Naive thymus-derived CD4-positive, alpha-beta T cell (primary cell): ENCODE measurements at regions of chr5 and their contacts with region 1.

Region 1: GRCh38 chr5:14142827-14143548 is at the start of gene TRIO:
- DNase-seq: peak; percentile 59 to 87 (median 70)
- ATAC-seq: peak; percentile 76
- H3K4me3 ChIP-seq: peak within 1 kb of the TSS; percentile 65
- H3K4me3 Mint-ChIP-seq: peak within 1 kb of the TSS; percentile 78 to 91 (median 86)
- H3K27ac ChIP-seq: peak within 1 kb of the TSS; percentile 46
- H3K27ac Mint-ChIP-seq: peak within 1 kb of the TSS in 5 of 9 donors; percentile 20 to 80 (median 38)
- H3K4me1 ChIP-seq: peaks cover 6% of the 10 kb centered on the region in 2 donors
- H3K4me1 Mint-ChIP-seq: peaks cover 5 to 18% (median 14%) of the 10 kb centered on the region in 7 donors
- H3K27me3 ChIP-seq: peaks cover 3% of the 10 kb centered on the region in 2 donors
- H3K27me3 Mint-ChIP-seq: peaks cover 15 to 63% (median 35%) of the 10 kb centered on the region in 5 donors
- total RNA-seq, gene TRIO: 5.5 to 45.9 (median 8.5) TPM

Region 2: GRCh38 chr5:14011089-14012004 is 131.6 kb before region 1 on chr5:
- CTCF ChIA-PET with region 1: no interaction called
- POLR2A ChIA-PET with region 1: no interaction called
- intact Hi-C with region 1: loop called in 1 of 2 experiments (anchors 5 kb)
- DNase-seq: peak in 5 of 9 donors; percentile 0 to 61 (median 9)
- ATAC-seq: peak; percentile 66
- H3K4me3 ChIP-seq: no peak overlapping the region
- H3K4me3 Mint-ChIP-seq: peak overlapping the region; percentile 64 to 88 (median 82)
- H3K27ac ChIP-seq: no peak overlapping the region
- H3K27ac Mint-ChIP-seq: no peak overlapping the region
- H3K4me1 ChIP-seq: peaks cover 0 to 3% of the 10 kb centered on the region in 2 donors
- H3K4me1 Mint-ChIP-seq: peaks cover 6 to 19% (median 11%) of the 10 kb centered on the region in 7 donors
- H3K27me3 ChIP-seq: no peaks in the 10 kb centered on the region
- H3K27me3 Mint-ChIP-seq: peaks cover 31 to 73% (median 55%) of the 10 kb centered on the region in 5 donors

Region 3: DNA sequence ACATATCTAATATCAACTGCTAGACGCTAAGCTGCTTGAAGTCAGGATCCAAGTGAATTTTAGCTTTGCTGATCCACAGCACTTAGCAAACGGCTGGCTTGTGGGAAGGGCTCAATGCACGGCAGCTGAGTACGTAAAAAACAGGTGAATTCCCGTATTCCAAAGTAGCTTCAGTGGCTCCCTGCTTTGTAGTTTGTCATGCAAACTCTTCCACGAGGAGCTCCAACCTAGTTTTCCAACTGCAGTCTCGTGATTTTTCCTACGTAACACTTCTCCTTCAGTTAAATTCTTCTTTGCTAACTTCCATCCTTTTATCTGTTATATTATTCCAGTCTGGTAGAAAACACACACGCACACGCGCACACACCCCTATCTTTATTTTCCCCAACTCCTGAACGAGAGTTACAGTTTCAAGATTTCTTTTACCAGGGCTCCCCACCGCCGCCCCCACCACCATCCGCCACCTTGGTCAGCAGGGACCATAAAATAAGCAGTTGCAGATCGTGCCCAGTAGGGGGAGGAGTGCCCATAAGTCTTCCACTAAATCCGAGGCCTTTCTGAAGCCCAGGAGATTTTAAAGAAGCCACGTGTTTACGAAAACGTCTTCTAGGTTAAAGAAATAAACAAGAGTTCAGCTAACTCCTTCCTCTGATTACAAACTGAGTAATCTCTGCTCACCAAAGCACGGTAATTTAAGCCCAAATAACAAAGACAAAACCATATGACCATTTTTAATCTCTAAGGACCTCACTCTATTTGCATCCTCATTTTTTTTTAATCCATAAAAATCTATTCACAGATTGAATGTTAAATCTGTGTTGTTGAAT is 34.6 kb before region 1 on chr5:
- CTCF ChIA-PET with region 1: no interaction called
- POLR2A ChIA-PET with region 1: no interaction called
- intact Hi-C with region 1: loop called in 1 of 2 experiments (anchors 2 kb)
- DNase-seq: peak in 6 of 9 donors; percentile 4 to 37 (median 20)
- ATAC-seq: peak; percentile 80
- H3K4me3 ChIP-seq: no peak overlapping the region
- H3K4me3 Mint-ChIP-seq: peak overlapping the region in 6 of 10 donors; percentile 2 to 39 (median 22)
- H3K27ac ChIP-seq: no peak overlapping the region
- H3K27ac Mint-ChIP-seq: peak overlapping the region in 1 of 9 donors; percentile 0
- H3K4me1 ChIP-seq: no peaks in the 10 kb centered on the region
- H3K4me1 Mint-ChIP-seq: peaks cover 0 to 19% (median 4%) of the 10 kb centered on the region in 7 donors
- H3K27me3 ChIP-seq: no peaks in the 10 kb centered on the region
- H3K27me3 Mint-ChIP-seq: peaks cover 9 to 27% (median 23%) of the 10 kb centered on the region in 5 donors

Region 4: GRCh38 chr5:14264604-14265316 is 121.8 kb after region 1 on chr5:
- CTCF ChIA-PET with region 1: no interaction called
- POLR2A ChIA-PET with region 1: no interaction called
- intact Hi-C with region 1: loop called in 1 of 2 experiments (anchors 1 kb)
- DNase-seq: peak; percentile 30 to 78 (median 60)
- ATAC-seq: peak; percentile 93
- H3K4me3 ChIP-seq: peak overlapping the region; percentile 27
- H3K4me3 Mint-ChIP-seq: peak overlapping the region; percentile 51 to 81 (median 66)
- H3K27ac ChIP-seq: no peak overlapping the region
- H3K27ac Mint-ChIP-seq: peak overlapping the region in 1 of 9 donors; percentile 65
- H3K4me1 ChIP-seq: no peaks in the 10 kb centered on the region
- H3K4me1 Mint-ChIP-seq: peaks cover 6 to 12% (median 6%) of the 10 kb centered on the region in 7 donors
- H3K27me3 ChIP-seq: peaks cover 0 to 5% of the 10 kb centered on the region in 2 donors
- H3K27me3 Mint-ChIP-seq: peaks cover 11 to 41% (median 33%) of the 10 kb centered on the region in 5 donors

Region 5: DNA sequence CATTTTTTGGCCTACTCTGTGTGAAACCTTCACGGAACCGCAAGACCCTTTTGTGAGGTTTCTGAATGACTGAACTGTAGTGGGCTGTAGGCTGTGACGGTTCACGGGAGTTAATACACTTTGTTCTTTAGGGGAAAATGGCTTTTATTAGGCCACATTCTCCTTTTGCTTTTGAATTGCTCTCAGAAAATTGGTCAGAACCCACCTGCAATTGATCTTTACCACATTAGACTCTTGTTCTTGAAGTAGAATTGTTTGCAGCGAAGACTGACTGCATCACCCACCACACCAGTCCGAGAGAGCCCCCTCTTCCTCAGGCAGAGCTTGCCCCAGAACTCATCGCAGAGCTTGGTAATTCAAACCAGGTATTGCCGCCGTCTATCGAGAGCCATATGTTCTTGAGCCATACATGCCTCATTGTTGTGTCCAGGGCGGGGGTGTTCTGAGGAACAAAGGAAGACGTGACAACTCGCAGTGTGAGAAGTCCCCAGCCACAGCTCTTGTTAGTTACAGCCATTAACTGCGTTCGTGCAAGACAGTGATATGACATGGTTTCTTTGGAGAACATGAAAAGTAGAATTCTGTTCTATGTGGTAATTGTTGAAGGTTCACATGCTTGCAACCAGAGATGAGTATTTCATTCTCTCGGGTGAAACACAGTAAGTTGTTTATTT is 272.2 kb after region 1 on chr5:
- CTCF ChIA-PET with region 1: no interaction called
- POLR2A ChIA-PET with region 1: no interaction called
- intact Hi-C with region 1: loop called in 1 of 2 experiments (anchors 10 kb)
- DNase-seq: no peak
- ATAC-seq: no peak
- H3K4me3 ChIP-seq: peak overlapping the region; percentile 17
- H3K4me3 Mint-ChIP-seq: peak overlapping the region in 7 of 10 donors; percentile 57 to 87 (median 73)
- H3K27ac ChIP-seq: no peak overlapping the region
- H3K27ac Mint-ChIP-seq: peak overlapping the region; percentile 89 to 97 (median 94)
- H3K4me1 ChIP-seq: peaks cover 31 to 32% of the 10 kb centered on the region in 2 donors
- H3K4me1 Mint-ChIP-seq: peaks cover 26 to 52% (median 40%) of the 10 kb centered on the region in 7 donors
- H3K27me3 ChIP-seq: no peaks in the 10 kb centered on the region
- H3K27me3 Mint-ChIP-seq: no peaks in the 10 kb centered on the region

Region 6: GRCh38 chr5:15785531-15785981 is 1642.6 kb after region 1 on chr5:
- CTCF ChIA-PET with region 1: no interaction called
- POLR2A ChIA-PET with region 1: no interaction called
- intact Hi-C with region 1: no loop called
- DNase-seq: no peak
- ATAC-seq: no peak
- H3K4me3 ChIP-seq: no peak overlapping the region
- H3K4me3 Mint-ChIP-seq: no peak overlapping the region
- H3K27ac ChIP-seq: no peak overlapping the region
- H3K27ac Mint-ChIP-seq: no peak overlapping the region
- H3K4me1 ChIP-seq: no peaks in the 10 kb centered on the region
- H3K4me1 Mint-ChIP-seq: no peaks in the 10 kb centered on the region
- H3K27me3 ChIP-seq: no peaks in the 10 kb centered on the region
- H3K27me3 Mint-ChIP-seq: no peaks in the 10 kb centered on the region